SK-N-SH (cell line): ENCODE measurements at regions of chr6 and their contacts with region 1.

Region 1: GRCh38 chr6:56595490-56596122 is 47.1 kb downstream of the DST start:
- DNase-seq: peak; percentile 10
- H3K4me3 ChIP-seq: no peak overlapping the region
- H3K27ac ChIP-seq: peak overlapping the region in 1 of 2 experiments; percentile 22; a peak in 1 of 4 replicates
- H3K4me1 ChIP-seq: no peaks in the 10 kb centered on the region; a peak in 2 of 4 replicates
- H3K27me3 ChIP-seq: no peaks in the 10 kb centered on the region
- CTCF ChIP-seq: peak; percentile 83
- EP300 ChIP-seq: no peak
- RAD21 ChIP-seq: peak; percentile 62

Region 2: GRCh38 chr6:56314683-56315523 is 280.7 kb before region 1 on chr6:
- CTCF ChIA-PET with region 1: interaction called, 53 read pairs
- POLR2A ChIA-PET with region 1: no interaction called
- DNase-seq: peak; percentile 26
- H3K4me3 ChIP-seq: no peak overlapping the region; a peak in 1 of 4 replicates
- H3K27ac ChIP-seq: no peak overlapping the region
- H3K4me1 ChIP-seq: no peaks in the 10 kb centered on the region
- H3K27me3 ChIP-seq: no peaks in the 10 kb centered on the region
- CTCF ChIP-seq: peak; percentile 94
- EP300 ChIP-seq: no peak
- RAD21 ChIP-seq: peak; percentile 90

Region 3: GRCh38 chr6:56364827-56365313 is 230.7 kb before region 1 on chr6:
- CTCF ChIA-PET with region 1: interaction called, 150 read pairs
- POLR2A ChIA-PET with region 1: no interaction called
- DNase-seq: no peak
- H3K4me3 ChIP-seq: no peak overlapping the region; a peak in 1 of 4 replicates
- H3K27ac ChIP-seq: peak overlapping the region; percentile 96
- H3K4me1 ChIP-seq: peaks cover 31 to 34% of the 10 kb centered on the region in 2 experiments
- H3K27me3 ChIP-seq: no peaks in the 10 kb centered on the region
- CTCF ChIP-seq: no peak
- EP300 ChIP-seq: peak; percentile 60 to 95; a peak in 3 of 4 replicates
- RAD21 ChIP-seq: no peak

Region 4: DNA sequence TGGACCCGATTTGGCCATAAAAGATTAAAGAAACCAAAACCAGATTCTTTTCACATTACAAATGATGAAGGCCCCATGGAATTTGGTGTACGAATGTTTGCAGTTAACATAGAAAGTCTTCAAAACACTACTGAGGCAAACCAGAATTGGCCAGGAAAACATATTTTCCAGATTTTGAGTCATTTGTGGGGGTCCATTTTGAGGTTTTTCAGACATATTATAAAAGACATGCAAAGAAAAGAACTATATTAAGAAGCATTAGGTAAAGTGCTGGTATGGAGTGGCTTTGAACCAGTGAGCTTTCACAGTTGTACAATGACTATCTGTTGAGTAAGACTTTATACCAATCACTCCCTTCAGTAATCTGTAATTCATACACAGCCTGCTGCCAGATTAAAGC is 179.4 kb before region 1 on chr6:
- CTCF ChIA-PET with region 1: no interaction called
- POLR2A ChIA-PET with region 1: no interaction called
- DNase-seq: no peak
- H3K4me3 ChIP-seq: no peak overlapping the region
- H3K27ac ChIP-seq: peak overlapping the region in 1 of 2 experiments; percentile 51; a peak in 2 of 4 replicates
- H3K4me1 ChIP-seq: no peaks in the 10 kb centered on the region
- H3K27me3 ChIP-seq: no peaks in the 10 kb centered on the region
- CTCF ChIP-seq: no peak
- EP300 ChIP-seq: peak in 1 of 2 experiments; percentile 27; a peak in 1 of 4 replicates
- RAD21 ChIP-seq: no peak

Region 5: DNA sequence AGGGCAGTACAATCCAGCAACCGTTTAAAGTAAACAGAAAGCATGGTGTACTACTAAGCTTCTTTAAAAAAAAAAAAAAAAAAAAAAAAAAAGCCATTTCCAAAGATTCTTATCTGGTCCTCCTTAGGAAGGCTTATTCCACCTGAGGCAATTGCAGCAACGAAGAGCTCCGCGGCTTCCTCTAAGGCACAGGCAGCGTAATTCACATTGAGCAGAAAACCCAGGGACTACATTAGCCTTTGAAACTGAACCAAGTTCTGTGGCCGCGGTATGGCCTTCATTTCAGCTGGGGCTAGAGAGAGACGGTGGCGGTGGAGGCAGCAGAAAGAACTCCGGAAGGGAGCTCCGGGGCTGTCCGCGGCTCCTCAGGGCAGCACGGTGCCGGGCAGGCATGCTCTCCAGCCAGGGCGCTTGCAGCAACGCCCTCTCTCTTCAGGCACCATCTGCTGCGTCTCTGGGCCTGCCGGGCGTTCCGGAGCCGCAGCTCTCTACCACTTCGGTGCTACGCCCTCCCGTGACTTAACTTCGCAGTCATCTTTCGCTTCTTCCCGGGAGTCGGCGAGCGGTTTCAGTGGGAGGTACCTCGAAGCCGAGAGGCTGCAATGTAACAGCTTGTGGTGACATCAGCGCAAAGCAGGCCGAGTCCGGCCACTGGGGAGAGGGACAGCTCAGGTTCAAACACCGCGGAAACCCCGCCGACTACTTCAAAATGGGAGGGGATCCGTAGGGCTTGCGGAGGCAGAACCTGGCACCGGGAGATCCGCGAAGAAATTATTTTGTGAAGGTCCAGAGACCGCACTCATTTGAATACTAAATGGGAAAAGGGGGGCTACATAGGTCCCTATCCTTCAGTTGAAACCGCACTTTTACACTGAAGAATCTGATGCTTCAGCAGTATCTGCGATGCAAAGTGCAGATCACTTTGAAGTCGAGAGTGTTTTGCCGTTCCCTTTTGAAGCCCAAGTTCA is 53.0 kb before region 1 on chr6:
- CTCF ChIA-PET with region 1: interaction called, 25 read pairs
- POLR2A ChIA-PET with region 1: interaction called, 4 read pairs
- DNase-seq: peak; percentile 74
- H3K4me3 ChIP-seq: peak overlapping the region; percentile 56 to 76
- H3K27ac ChIP-seq: peak overlapping the region; percentile 88 to 96
- H3K4me1 ChIP-seq: peaks cover 19 to 31% of the 10 kb centered on the region in 2 experiments; a peak in 3 of 4 replicates
- H3K27me3 ChIP-seq: no peaks in the 10 kb centered on the region
- CTCF ChIP-seq: no peak
- EP300 ChIP-seq: peak; percentile 4 to 24; a peak in 2 of 4 replicates
- RAD21 ChIP-seq: 0 out of 2 replicates have a peak, but pooled peaks have one; percentile 11

Region 6: DNA sequence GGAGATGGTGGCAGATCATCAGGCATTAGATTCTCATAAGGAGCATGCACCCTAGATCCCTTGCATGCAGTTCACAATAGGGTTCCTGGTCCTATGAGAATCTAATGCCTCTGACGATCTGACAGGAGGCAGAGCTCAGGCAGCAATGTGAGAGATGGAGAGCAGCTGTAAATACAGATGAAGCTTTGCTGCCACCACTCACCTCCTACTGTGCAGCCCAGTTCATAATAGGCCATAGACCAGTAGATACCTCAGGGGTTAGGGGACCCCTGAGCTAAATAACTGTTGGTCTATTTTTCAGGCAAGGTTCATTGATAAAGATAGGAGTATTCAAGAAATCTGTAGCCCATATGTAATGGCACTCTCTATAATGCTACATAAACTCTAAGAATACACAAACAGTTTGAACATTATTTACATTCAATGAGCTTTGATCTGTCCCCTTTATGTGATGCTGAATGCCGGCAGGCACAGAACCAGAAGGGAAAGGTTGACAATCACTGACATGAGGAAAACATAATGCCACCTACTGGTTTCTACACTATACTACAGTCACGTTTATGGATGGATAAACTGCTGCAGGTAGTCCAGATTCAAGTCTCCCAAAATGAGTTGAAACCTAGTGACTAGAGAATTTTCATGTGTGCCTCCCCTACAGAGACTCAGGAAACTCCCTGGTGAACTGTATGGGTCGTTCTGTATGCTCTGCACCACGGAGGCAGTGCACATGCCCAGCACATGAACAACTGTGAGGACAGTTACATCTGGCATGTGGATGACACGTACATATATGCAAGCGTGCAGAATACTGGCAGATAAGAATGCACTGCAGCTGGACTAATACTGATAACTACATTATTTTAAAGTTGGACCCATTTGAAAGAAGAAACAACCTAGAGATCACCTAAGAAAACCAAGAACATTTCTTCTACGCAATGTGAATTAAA is 24.9 kb before region 1 on chr6:
- CTCF ChIA-PET with region 1: interaction called, 76 read pairs
- POLR2A ChIA-PET with region 1: no interaction called
- DNase-seq: peak; percentile 33
- H3K4me3 ChIP-seq: no peak overlapping the region
- H3K27ac ChIP-seq: peak overlapping the region in 1 of 2 experiments; percentile 11; a peak in 1 of 4 replicates
- H3K4me1 ChIP-seq: peaks cover 14 to 29% of the 10 kb centered on the region in 2 experiments; a peak in 3 of 4 replicates
- H3K27me3 ChIP-seq: no peaks in the 10 kb centered on the region
- CTCF ChIP-seq: peak; percentile 63
- EP300 ChIP-seq: no peak
- RAD21 ChIP-seq: peak; percentile 59

Region 7: GRCh38 chr6:56699066-56699654 is 103.6 kb after region 1 on chr6:
- CTCF ChIA-PET with region 1: interaction called, 13 read pairs
- POLR2A ChIA-PET with region 1: no interaction called
- DNase-seq: no peak
- H3K4me3 ChIP-seq: no peak overlapping the region
- H3K27ac ChIP-seq: peak overlapping the region in 1 of 2 experiments; percentile 21; a peak in 1 of 4 replicates
- H3K4me1 ChIP-seq: peaks cover 0 to 19% of the 10 kb centered on the region in 2 experiments; a peak in 3 of 4 replicates
- H3K27me3 ChIP-seq: no peaks in the 10 kb centered on the region
- CTCF ChIP-seq: peak; percentile 68
- EP300 ChIP-seq: no peak
- RAD21 ChIP-seq: peak; percentile 71